Activated T-helper 1 cell treated with anti-CD3 and anti-CD28 coated beads, Interleukin-12 subunit alpha, Interleukin-12 subunit beta, Interleukin-2, Interleukin-4 antibody, amounts not matched to agents 30 ng/mL and 10 ng/mL and 1 ng/mL, durations not matched to agents 14 hours and 24 hours and 36 hours (primary cell): ENCODE measurements at regions of chr5 and their contacts with region 1.

Region 1: DNA sequence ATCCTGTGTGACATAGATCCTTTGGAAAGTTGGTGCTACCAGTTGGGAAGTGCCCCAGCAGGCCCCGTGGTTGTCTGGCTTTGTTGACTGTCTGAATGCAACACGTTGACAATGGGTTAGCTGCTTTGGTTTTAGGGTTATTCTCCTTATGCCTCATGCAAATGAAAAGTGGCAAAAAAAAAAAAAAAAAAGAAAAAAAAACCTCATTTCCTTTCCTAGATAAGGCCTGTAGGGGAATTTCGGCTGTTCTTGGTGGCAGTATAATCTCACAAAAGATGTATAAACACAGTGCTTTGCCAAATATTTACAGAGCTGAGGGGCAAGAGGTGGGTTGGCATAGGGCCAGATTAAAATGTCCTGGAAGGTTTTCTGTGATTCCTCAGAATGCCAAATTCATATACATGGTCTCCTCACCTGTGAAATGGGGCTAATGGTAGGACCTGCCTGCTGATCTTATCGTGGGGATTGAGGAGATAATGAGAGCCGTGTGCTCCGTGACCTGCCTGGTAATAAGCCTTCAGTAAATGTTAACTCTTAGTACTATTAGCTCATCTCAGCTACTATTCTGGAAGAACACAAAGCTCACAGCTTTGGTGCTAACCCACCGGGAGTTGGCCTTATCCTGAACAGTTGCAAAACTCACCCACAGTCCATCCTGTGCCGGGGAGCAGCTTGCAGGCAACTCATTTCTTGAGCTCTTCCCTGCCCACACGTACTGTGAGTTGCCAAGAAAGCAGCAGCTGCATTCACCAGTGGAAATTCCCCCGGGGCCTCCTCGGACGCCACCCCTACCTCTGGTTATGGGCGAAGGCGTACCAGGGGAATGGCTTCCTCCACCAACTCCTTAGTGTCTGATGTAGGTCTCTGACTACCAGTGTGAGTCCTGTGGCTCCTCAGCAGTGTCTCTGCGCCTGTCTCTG is 220.3 kb downstream of the NR3C1 start:
- DNase-seq: peak; percentile 68
- H3K4me3 Mint-ChIP-seq: peak overlapping the region; percentile 29
- H3K27ac Mint-ChIP-seq: peak overlapping the region; percentile 93
- H3K4me1 Mint-ChIP-seq: peaks cover 77% of the 10 kb centered on the region
- H3K27me3 Mint-ChIP-seq: no peaks in the 10 kb centered on the region

Region 2: DNA sequence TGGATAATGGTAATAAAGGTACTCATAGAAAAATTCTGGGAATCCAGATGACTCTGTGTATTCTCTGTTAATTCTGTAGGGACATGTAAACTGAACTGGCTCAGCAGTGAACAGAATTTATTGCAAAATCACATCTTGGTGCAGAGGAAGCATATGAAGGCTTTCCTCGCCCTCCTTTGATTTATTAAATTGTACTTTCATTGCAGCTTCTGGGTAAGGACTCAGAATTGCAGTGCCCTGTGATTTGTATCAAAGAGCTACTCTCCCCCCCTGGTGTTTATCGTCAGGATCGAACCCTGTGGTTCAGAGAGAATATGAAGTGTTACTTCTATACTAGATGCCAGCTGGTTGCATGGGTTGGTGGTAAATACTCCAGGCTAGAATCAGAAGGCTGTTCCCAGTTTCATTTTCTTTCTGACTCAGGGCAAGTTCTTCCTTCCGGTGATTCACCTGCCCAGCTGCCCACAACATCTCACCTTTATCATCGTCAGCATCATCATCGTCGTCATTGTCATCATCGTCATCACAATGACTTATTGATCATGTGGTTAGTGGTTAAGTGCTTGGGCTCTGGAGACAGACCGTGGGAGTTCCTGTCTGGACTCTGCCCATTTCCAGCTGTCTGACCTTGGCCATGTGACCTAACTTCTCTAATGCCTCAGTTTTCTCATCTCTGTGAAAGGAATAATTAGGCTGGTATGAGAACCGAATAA is 174.2 kb before region 1 on chr5:
- intact Hi-C with region 1: loop called (anchors 1 kb)
- DNase-seq: peak; percentile 82
- H3K4me3 Mint-ChIP-seq: peak overlapping the region; percentile 24
- H3K27ac Mint-ChIP-seq: peak overlapping the region; percentile 86
- H3K4me1 Mint-ChIP-seq: peaks cover 79% of the 10 kb centered on the region
- H3K27me3 Mint-ChIP-seq: no peaks in the 10 kb centered on the region

Region 3: GRCh38 chr5:143119291-143119769 is 63.8 kb before region 1 on chr5:
- intact Hi-C with region 1: loop called (anchors 1 kb)
- DNase-seq: no peak
- H3K4me3 Mint-ChIP-seq: no peak overlapping the region
- H3K27ac Mint-ChIP-seq: peak overlapping the region; percentile 79
- H3K4me1 Mint-ChIP-seq: peaks cover 60% of the 10 kb centered on the region
- H3K27me3 Mint-ChIP-seq: peaks cover 1% of the 10 kb centered on the region

Region 4: GRCh38 chr5:143222287-143223231 is 39.4 kb after region 1 on chr5:
- intact Hi-C with region 1: loop called (anchors 1 kb)
- DNase-seq: peak; percentile 59
- H3K4me3 Mint-ChIP-seq: peak overlapping the region; percentile 60
- H3K27ac Mint-ChIP-seq: peak overlapping the region; percentile 92
- H3K4me1 Mint-ChIP-seq: peaks cover 77% of the 10 kb centered on the region
- H3K27me3 Mint-ChIP-seq: no peaks in the 10 kb centered on the region

Region 5: DNA sequence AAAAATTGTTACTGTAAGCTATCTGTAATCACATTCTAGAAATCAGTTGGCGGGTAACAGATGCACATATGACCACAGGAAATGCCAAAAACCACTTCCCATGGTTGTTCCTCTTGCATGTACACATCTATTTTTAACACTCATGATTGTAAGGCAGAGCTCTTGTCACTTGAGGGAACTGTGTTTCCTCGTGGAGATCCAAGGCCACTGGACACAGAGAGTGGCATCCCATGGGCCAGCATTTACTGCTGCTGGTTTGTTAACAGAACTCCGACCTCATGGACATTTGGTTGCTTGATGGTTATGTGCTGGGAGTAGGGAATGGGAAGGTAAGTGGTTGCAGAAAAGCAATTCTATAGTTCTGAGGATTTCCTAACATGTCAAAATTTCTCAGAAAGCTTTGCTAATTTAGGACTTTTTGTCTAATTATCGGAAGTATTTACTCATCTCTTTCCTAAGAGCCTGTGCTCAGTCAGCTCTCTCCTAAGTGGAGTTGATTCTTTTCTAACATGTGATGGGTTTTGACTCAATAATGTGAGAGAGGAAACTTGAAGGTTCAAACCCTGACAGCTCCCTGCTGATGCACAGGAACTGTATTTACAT is 422.3 kb after region 1 on chr5:
- intact Hi-C with region 1: loop called (anchors 5 kb)
- DNase-seq: peak; percentile 25
- H3K4me3 Mint-ChIP-seq: peak overlapping the region; percentile 56
- H3K27ac Mint-ChIP-seq: peak overlapping the region; percentile 91
- H3K4me1 Mint-ChIP-seq: peaks cover 38% of the 10 kb centered on the region
- H3K27me3 Mint-ChIP-seq: no peaks in the 10 kb centered on the region